ENCODE measurements at regions of chr1 and their contacts with region 1.

Region 1: DNA sequence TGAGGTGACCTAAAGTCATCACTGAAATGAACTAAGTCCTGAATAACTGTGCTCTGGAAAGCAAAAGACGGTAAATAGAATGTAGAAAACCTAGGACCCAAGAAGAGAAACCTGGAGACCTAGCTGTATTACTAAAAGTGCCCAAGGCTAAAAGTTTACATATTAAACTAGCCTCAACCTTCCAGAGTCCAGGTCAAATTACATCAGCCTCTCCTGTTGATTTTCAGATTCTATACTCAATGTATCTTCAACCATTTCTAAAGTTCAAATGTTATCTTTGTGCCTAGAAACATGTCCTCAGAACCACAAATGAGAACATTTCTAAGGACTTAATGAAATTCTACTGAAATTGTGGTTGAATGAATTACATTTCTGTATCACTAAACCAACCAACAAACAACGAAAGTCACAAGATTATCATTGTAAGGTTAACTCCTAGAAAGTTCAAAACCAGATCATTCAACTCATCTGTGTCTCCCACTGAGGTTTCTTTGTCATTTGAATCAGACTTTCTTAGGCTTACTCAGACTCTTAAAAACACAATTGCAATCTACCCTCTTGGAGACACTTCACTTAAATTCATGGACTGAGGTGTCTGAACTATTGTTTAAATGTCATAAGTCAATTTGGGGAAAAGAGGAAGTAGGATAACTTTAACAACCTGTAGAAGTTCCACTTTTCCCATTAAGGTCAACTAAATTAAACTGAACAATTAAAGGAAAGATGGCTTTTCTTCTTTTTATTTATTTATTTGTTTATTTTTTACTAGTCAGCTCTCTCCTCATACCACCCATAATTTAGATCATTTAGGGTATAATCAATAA is 207.7 kb downstream of the BARHL2 start:
- DNase-seq: no peak
- H3K4me3 ChIP-seq: no peak overlapping the region
- H3K27ac ChIP-seq: no peak overlapping the region
- H3K4me1 ChIP-seq: no peaks in the 10 kb centered on the region
- H3K27me3 ChIP-seq: no peaks in the 10 kb centered on the region
- CTCF ChIP-seq: no peak

Region 2: GRCh38 chr1:90434460-90434859 is 75.0 kb before region 1 on chr1:
- CTCF ChIA-PET with region 1: no interaction called
- dilution Hi-C with region 1: no loop called
- in situ Hi-C with region 1: no loop called
- intact Hi-C with region 1: no loop called
- DNase-seq: no peak
- H3K4me3 ChIP-seq: no peak overlapping the region
- H3K27ac ChIP-seq: no peak overlapping the region
- H3K4me1 ChIP-seq: no peaks in the 10 kb centered on the region
- H3K27me3 ChIP-seq: peaks cover 2% of the 10 kb centered on the region
- CTCF ChIP-seq: peak in 1 of 2 donors; percentile 37

Region 3: DNA sequence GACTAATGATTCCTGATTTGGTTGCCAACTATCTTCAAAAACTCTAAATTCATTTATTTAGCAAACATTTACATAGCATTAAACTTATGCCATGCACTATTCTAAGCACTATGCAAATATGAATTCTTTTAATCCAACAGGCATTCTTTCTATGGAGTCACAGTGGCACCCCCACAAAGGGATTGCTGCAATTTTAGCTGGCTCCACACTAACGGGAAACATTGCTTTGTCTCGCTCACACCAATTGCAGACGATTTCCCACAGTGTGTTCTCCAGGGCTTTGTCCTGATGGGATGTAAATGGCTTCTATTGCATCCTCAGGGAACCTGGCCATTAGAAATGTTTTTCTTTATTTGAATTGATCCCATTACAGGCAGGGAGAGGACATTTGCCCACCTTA is 51.5 kb before region 1 on chr1:
- CTCF ChIA-PET with region 1: no interaction called
- dilution Hi-C with region 1: no loop called
- in situ Hi-C with region 1: no loop called
- intact Hi-C with region 1: no loop called
- DNase-seq: no peak
- H3K4me3 ChIP-seq: no peak overlapping the region
- H3K27ac ChIP-seq: no peak overlapping the region
- H3K4me1 ChIP-seq: no peaks in the 10 kb centered on the region
- H3K27me3 ChIP-seq: no peaks in the 10 kb centered on the region
- CTCF ChIP-seq: no peak

Region 4: GRCh38 chr1:90526954-90527353 is 17.5 kb after region 1 on chr1:
- CTCF ChIA-PET with region 1: no interaction called
- dilution Hi-C with region 1: no loop called
- in situ Hi-C with region 1: no loop called
- intact Hi-C with region 1: no loop called
- DNase-seq: no peak
- H3K4me3 ChIP-seq: no peak overlapping the region
- H3K27ac ChIP-seq: no peak overlapping the region
- H3K4me1 ChIP-seq: no peaks in the 10 kb centered on the region
- H3K27me3 ChIP-seq: no peaks in the 10 kb centered on the region
- CTCF ChIP-seq: no peak

Region 5: GRCh38 chr1:92404661-92405060 is 1895.2 kb after region 1 on chr1:
- CTCF ChIA-PET with region 1: no interaction called
- dilution Hi-C with region 1: no loop called
- in situ Hi-C with region 1: no loop called
- intact Hi-C with region 1: loop called (anchors 10 kb)
- DNase-seq: peak; percentile 49
- H3K4me3 ChIP-seq: no peak overlapping the region
- H3K27ac ChIP-seq: no peak overlapping the region
- H3K4me1 ChIP-seq: no peaks in the 10 kb centered on the region
- H3K27me3 ChIP-seq: no peaks in the 10 kb centered on the region
- CTCF ChIP-seq: no peak

Measured in mammary epithelial cell (primary cell).